ENCODE measurements at regions of chr10 and their contacts with region 1.

Region 1: GRCh38 chr10:113454341-113455061 is 98.4 kb upstream of the HABP2 start:
- DNase-seq: no peak
- H3K4me3 ChIP-seq: no peak overlapping the region
- H3K27me3 ChIP-seq: peaks cover 14% of the 10 kb centered on the region
- CTCF ChIP-seq: peak; percentile 85

Region 2: DNA sequence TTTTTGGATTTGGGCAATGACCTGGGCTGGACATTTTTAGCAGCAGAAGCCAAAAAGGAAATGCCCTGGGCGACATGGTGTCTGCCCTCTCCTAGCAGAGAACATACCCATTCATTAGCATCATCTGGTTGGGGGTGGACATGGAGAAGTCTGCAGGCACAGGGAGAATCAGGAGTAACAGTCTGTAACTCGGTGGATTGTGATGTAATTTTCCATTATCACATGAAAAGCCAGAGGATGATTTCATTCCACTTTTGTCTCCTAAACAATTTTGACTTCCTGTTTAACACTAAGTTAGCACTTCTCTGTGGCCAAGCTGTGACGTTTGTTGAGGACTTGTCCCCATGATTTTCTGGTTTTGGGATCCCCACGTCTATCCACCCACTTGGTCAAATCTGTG is 55.4 kb before region 1 on chr10:
- CTCF ChIA-PET with region 1: no interaction called
- POLR2A ChIA-PET with region 1: no interaction called
- DNase-seq: no peak
- H3K4me3 ChIP-seq: no peak overlapping the region
- H3K27me3 ChIP-seq: no peaks in the 10 kb centered on the region; the same call in none of the 2 replicates
- CTCF ChIP-seq: no peak

Region 3: GRCh38 chr10:113435881-113436280 is 18.6 kb before region 1 on chr10:
- CTCF ChIA-PET with region 1: interaction called, 39 read pairs
- POLR2A ChIA-PET with region 1: no interaction called
- DNase-seq: no peak
- H3K4me3 ChIP-seq: no peak overlapping the region
- H3K27me3 ChIP-seq: peaks cover 6% of the 10 kb centered on the region; the same call in 1 of the 2 replicates
- CTCF ChIP-seq: no peak

Region 4: DNA sequence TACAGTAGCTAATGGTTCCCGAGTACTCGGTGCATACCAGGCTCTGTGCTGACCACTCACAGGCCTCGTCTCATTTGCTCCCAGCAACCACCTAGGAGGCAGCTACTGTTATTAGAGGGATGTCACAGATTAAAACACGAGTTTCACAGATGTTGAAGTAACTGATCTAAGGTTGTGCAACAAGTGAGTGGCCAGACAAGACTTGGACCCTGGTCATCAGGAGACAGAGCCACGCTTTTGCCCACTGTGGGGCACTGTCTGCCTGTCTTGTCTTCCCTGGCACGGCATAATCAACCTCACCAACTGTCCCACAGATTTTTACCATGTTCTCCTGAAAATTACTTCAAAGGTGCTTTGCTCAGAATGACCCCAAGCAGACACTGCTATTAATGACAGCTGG is 13.3 kb before region 1 on chr10:
- CTCF ChIA-PET with region 1: interaction called, 39 read pairs
- POLR2A ChIA-PET with region 1: interaction called, 3 read pairs
- DNase-seq: no peak
- H3K4me3 ChIP-seq: no peak overlapping the region
- H3K27me3 ChIP-seq: peaks cover 6% of the 10 kb centered on the region
- CTCF ChIP-seq: no peak; the same call in 1 of the 2 replicates

Region 5: GRCh38 chr10:113475381-113475807 is 20.9 kb after region 1 on chr10:
- CTCF ChIA-PET with region 1: interaction called, 12 read pairs
- POLR2A ChIA-PET with region 1: no interaction called
- DNase-seq: peak; percentile 98
- H3K4me3 ChIP-seq: no peak overlapping the region
- H3K27me3 ChIP-seq: 0 out of 2 replicates have a peak, but pooled peaks cover 2% of the 10 kb centered on the region
- CTCF ChIP-seq: peak; percentile 64

Region 6: GRCh38 chr10:113521123-113521795 is 66.8 kb after region 1 on chr10:
- CTCF ChIA-PET with region 1: interaction called, 18 read pairs
- POLR2A ChIA-PET with region 1: no interaction called
- DNase-seq: no peak
- H3K4me3 ChIP-seq: no peak overlapping the region
- H3K27me3 ChIP-seq: no peaks in the 10 kb centered on the region; the same call in 1 of the 2 replicates
- CTCF ChIP-seq: peak; percentile 99

Region 7: DNA sequence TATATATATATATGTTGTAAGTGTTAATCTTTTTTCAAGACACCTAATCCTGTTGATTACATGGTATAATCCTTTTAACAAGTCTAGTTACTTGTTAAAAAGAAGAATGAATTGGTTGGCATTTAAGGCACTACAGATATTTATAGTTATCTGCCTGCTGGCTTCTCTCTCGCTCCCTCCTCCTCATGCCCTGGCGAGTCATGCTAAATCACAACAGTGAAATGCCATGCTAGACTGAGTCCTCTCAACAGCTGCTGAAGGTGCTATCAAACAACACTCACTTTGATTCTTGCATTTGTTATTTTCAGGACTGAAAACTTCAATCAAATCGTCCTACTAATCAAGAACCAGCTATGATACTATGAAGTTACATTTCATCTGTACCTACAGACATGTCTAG is 194.0 kb after region 1 on chr10:
- CTCF ChIA-PET with region 1: no interaction called
- POLR2A ChIA-PET with region 1: no interaction called
- DNase-seq: no peak
- H3K4me3 ChIP-seq: no peak overlapping the region
- H3K27me3 ChIP-seq: peaks cover 1% of the 10 kb centered on the region; the same call in 1 of the 2 replicates
- CTCF ChIP-seq: no peak

Measured in BJ (cell line).